Right cardiac atrium (tissue), 5 donors: ENCODE measurements at regions of chr6 and their contacts with region 1.

Region 1: DNA sequence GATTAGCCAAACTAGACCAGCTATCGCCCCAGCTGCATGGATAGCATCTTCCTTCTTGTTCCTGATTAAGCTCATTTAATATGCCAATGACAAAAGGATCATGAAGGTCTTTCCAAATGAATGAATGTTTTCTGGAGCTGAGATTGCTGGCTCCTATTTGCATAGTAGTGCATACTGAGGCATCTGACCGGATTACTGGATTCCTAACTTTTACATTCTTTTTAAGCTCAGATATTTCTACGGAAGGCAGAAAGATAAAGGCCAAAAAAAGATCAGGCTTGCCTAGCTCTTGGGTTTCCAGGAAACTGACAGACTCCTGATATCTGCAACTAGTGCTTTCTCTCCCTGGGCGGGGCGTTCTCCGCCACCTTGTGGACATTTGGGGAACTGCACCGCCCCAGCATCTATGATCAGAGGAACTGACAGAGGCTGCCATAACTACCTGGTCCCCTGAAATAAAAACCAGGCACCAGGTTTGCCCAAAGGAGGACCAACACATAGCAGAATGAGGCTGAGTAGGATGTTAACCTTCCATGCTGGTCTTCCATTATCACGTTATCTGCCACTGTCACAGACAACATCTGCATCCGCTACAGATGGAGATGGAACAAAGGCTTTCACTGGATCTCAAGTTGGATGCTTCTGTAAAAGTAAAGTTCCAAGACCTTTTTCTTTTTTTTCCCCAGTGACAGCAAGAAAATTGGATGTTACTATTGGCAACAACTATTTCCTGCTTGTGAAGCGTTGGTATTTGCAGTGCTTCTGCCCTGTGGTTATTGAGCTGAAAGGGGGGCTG is 33.2 kb downstream of the NT5E start:
- DNase-seq: peak; percentile 76 to 92 (median 88)
- ATAC-seq: peak; percentile 88 to 94
- H3K4me3 ChIP-seq: no peak overlapping the region
- H3K27ac ChIP-seq: no peak overlapping the region
- H3K4me1 ChIP-seq: peaks cover 2% of the 10 kb centered on the region
- H3K27me3 ChIP-seq: no peaks in the 10 kb centered on the region

Region 2: GRCh38 chr6:85004361-85004995 is 478.6 kb before region 1 on chr6:
- intact Hi-C with region 1: no loop called
- DNase-seq: peak in 1 of 3 donors; percentile 49
- ATAC-seq: peak; percentile 56 to 87
- H3K4me3 ChIP-seq: no peak overlapping the region
- H3K27ac ChIP-seq: no peak overlapping the region
- H3K4me1 ChIP-seq: no peaks in the 10 kb centered on the region
- H3K27me3 ChIP-seq: no peaks in the 10 kb centered on the region

Region 3: DNA sequence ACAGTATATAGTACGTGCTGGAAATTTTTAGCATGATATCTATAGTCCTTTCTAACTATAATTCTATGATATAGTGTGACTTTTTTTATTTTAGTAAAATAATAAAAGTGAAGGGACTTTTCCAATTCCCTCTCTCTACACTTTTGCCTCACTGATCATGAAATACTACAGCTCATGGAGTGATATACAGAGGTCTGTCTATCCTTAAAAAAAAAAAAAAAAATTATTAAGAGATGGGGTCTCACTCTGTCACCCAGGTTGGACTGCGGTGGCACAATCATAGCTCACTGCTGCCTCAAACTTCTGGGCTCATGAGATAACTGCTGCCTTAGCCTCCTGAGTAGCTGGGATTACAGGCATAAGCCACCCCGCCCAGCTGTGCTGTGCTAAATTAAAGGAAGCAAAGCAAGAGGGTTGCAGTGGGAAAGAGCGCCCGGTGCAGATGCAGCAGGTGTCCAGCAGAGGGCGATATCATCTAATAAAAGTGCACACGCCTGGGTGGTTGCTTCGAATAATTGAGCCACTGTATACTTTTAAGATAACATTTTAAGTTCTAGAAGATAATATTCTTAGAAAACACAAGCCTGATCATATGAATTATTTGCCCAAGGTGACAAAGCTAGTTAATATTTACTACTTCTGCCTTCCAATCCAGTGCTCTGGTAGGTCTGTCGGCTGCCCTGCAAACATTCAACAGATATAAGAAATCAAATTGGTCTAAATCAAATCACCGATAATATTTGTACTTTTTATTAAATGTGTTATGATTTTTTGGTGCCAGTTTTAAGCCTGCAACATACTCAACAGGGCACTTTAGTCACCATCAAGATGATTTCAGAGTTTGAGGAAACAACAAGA is 128.1 kb before region 1 on chr6:
- intact Hi-C with region 1: loop called (anchors 2 to 10 kb)
- DNase-seq: peak; percentile 75 to 90 (median 81)
- ATAC-seq: peak; percentile 88 to 93
- H3K4me3 ChIP-seq: no peak overlapping the region
- H3K27ac ChIP-seq: no peak overlapping the region
- H3K4me1 ChIP-seq: no peaks in the 10 kb centered on the region
- H3K27me3 ChIP-seq: no peaks in the 10 kb centered on the region